Activated CD4-positive, alpha-beta T cell treated with anti-CD3 and anti-CD28 coated beads for 36 hours (primary cell): ENCODE measurements at regions of chr2 and their contacts with region 1.

Region 1: GRCh38 chr2:204871231-204871953 is 326.1 kb downstream of the PARD3B start:
- DNase-seq: no peak
- ATAC-seq: peak; percentile 64
- H3K4me3 Mint-ChIP-seq: no peak overlapping the region
- H3K27ac Mint-ChIP-seq: no peak overlapping the region
- H3K4me1 Mint-ChIP-seq: peaks cover 28% of the 10 kb centered on the region
- H3K27me3 Mint-ChIP-seq: no peaks in the 10 kb centered on the region

Region 2: GRCh38 chr2:204881655-204882054 is 10.3 kb after region 1 on chr2:
- CTCF ChIA-PET with region 1: interaction called, 10 read pairs
- POLR2A ChIA-PET with region 1: interaction called, 3 read pairs
- intact Hi-C with region 1: no loop called
- DNase-seq: peak; percentile 8
- ATAC-seq: peak; percentile 63
- H3K4me3 Mint-ChIP-seq: no peak overlapping the region
- H3K27ac Mint-ChIP-seq: peak overlapping the region; percentile 29
- H3K4me1 Mint-ChIP-seq: peaks cover 25% of the 10 kb centered on the region
- H3K27me3 Mint-ChIP-seq: no peaks in the 10 kb centered on the region

Region 3: GRCh38 chr2:204900910-204901309 is 29.5 kb after region 1 on chr2:
- CTCF ChIA-PET with region 1: no interaction called
- POLR2A ChIA-PET with region 1: no interaction called
- intact Hi-C with region 1: no loop called
- DNase-seq: no peak
- ATAC-seq: no peak
- H3K4me3 Mint-ChIP-seq: no peak overlapping the region
- H3K27ac Mint-ChIP-seq: no peak overlapping the region
- H3K4me1 Mint-ChIP-seq: peaks cover 16% of the 10 kb centered on the region
- H3K27me3 Mint-ChIP-seq: no peaks in the 10 kb centered on the region

Region 4: DNA sequence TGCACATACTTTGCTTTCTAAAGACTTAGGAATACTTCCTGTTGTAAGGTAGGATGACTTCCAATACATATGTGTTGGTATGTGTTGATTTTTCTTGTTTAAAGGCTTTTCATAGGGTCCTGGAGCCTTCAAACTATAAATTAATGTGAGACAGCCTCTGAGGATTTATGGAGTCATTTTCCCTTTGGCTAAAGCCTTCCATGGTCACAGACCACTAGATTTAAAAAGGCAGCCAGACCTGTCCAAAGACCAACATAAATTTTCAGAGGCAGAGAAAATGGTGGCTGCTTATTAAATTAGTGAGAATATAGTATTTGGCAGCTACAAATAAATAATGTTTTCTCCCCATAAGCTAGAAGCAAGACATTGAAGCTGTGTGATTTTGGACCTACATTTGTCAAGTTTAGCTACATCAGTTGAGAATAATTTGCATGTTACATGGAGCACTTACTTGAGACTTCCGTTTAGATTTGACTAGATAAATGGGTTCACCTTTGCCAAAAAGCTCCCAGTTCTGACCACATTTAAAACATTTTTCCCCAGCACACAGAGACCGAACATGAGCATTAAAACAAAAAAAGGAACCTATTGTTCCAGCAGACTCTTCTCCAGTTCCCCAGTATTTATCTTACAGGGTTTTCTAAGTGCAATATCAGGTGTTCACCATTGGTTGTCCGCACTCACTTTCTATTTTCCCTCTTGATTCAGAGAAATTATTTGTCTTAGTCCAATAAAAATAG is 76.8 kb after region 1 on chr2:
- CTCF ChIA-PET with region 1: no interaction called
- POLR2A ChIA-PET with region 1: no interaction called
- intact Hi-C with region 1: no loop called
- DNase-seq: no peak
- ATAC-seq: peak; percentile 72
- H3K4me3 Mint-ChIP-seq: no peak overlapping the region
- H3K27ac Mint-ChIP-seq: peak overlapping the region; percentile 71
- H3K4me1 Mint-ChIP-seq: peaks cover 42% of the 10 kb centered on the region
- H3K27me3 Mint-ChIP-seq: no peaks in the 10 kb centered on the region